ENCODE measurements at regions of chr9 and their contacts with region 1.

Region 1: DNA sequence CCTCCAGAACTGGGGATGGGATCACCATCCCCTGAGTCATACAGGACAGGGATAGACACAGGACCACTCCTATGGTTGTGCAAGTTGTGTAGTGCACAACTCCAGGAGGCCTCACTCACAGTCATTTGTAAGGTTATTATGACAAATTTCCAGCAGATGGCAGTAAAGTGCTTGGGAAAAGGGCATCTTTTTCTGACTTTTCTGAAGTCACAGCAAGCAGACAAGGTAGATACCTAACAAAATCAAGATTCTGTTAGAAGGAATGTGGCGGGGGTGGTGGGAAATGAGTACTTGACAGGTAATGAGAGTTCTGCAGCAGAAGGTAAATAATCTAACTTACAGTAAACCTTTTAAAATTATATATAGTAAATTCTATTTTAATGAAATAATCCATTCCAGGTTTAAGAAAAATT is 16.7 kb upstream of the KIF27 start:
- DNase-seq: peak; percentile 68
- ATAC-seq: peak; percentile 83
- H3K4me3 ChIP-seq: no peak overlapping the region
- H3K27ac ChIP-seq: no peak overlapping the region
- H3K4me1 ChIP-seq: peaks cover 18% of the 10 kb centered on the region
- H3K27me3 ChIP-seq: no peaks in the 10 kb centered on the region
- CTCF ChIP-seq: peak; percentile 78
- EP300 ChIP-seq: no peak
- POLR2A ChIP-seq: no peak
- RAD21 ChIP-seq: peak; percentile 80

Region 2: GRCh38 chr9:84061594-84062193 is 123.8 kb after region 1 on chr9:
- CTCF ChIA-PET with region 1: no interaction called
- POLR2A ChIA-PET with region 1: no interaction called
- in situ Hi-C with region 1: no loop called
- intact Hi-C with region 1: no loop called
- DNase-seq: no peak
- ATAC-seq: no peak
- H3K4me3 ChIP-seq: no peak overlapping the region
- H3K27ac ChIP-seq: no peak overlapping the region
- H3K4me1 ChIP-seq: no peaks in the 10 kb centered on the region
- H3K27me3 ChIP-seq: peaks cover 0 to 10% of the 10 kb centered on the region in 2 experiments; a peak in 1 of 5 replicates
- CTCF ChIP-seq: no peak
- EP300 ChIP-seq: no peak
- POLR2A ChIP-seq: no peak
- RAD21 ChIP-seq: no peak

Region 3: GRCh38 chr9:84170521-84171141 is 232.7 kb after region 1 on chr9:
- CTCF ChIA-PET with region 1: interaction called, 19 read pairs
- POLR2A ChIA-PET with region 1: no interaction called
- in situ Hi-C with region 1: loop called (anchors 5 kb)
- intact Hi-C with region 1: loop called (anchors 1 kb)
- DNase-seq: peak; percentile 45
- ATAC-seq: peak; percentile 93
- H3K4me3 ChIP-seq: no peak overlapping the region; a peak in 1 of 6 replicates
- H3K27ac ChIP-seq: no peak overlapping the region
- H3K4me1 ChIP-seq: peaks cover 17% of the 10 kb centered on the region; the same call in 1 of the 2 replicates
- H3K27me3 ChIP-seq: peaks cover 0 to 8% of the 10 kb centered on the region in 2 experiments; a peak in 2 of 5 replicates
- CTCF ChIP-seq: no peak; the same call in 1 of the 2 replicates
- EP300 ChIP-seq: no peak
- POLR2A ChIP-seq: no peak
- RAD21 ChIP-seq: no peak

Region 4: GRCh38 chr9:84315278-84315877 is 377.5 kb after region 1 on chr9:
- CTCF ChIA-PET with region 1: interaction called, 10 read pairs
- POLR2A ChIA-PET with region 1: no interaction called
- in situ Hi-C with region 1: no loop called
- intact Hi-C with region 1: loop called (anchors 1 kb)
- DNase-seq: peak; percentile 23
- ATAC-seq: peak; percentile 64
- H3K4me3 ChIP-seq: no peak overlapping the region
- H3K27ac ChIP-seq: no peak overlapping the region
- H3K4me1 ChIP-seq: no peaks in the 10 kb centered on the region
- H3K27me3 ChIP-seq: peaks cover 0 to 4% of the 10 kb centered on the region in 2 experiments; a peak in 2 of 5 replicates
- CTCF ChIP-seq: peak; percentile 71
- EP300 ChIP-seq: no peak
- POLR2A ChIP-seq: no peak
- RAD21 ChIP-seq: 0 out of 2 replicates have a peak, but pooled peaks have one; percentile 26

Measured in HepG2 (cell line).